HepG2 (cell line): ENCODE measurements at regions of chr12 and their contacts with region 1.

Region 1: DNA sequence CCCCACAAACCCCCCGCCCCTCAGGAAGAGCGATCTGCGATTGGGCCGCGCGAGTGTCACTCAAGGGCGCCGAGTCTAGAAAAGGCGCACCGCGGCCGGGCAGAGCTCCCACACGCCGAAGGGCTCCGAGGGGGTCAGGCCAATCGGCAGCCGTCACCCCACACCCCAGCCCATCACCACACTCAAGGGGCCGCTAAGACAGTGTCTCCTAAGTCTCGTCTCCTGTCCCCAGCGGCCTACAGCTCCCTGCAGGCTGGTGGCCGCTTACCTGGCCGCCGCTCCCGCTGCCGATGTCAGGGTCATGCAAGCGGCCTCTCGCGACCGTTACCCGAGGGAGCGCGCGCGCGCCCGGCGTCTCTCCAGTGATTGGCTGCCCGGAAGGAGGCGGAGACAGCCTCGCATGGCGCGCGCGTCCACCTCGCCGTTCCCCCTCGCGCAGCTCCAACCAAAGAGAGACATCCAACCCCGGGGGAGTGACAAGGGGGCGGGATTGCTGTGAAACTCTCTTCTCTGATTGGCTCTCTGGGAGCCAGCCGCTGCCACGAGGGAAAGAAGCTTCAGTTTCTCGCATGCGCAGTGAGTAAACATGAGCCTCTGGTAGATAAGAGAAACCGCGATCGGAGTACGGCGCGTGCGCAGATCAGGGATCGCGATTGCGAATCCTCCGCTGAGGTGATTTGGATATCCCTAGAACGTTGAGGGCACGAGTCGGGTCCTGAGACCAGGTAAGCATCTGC is at the starts of genes MPHOSPH9 and MTRFR:
- DNase-seq: peak; percentile 100
- ATAC-seq: peak; percentile 95
- H3K4me3 ChIP-seq: peak within 1 kb of the TSS; percentile 81 to 96 (median 95)
- H3K27ac ChIP-seq: peak within 1 kb of the TSS; percentile 89
- H3K4me1 ChIP-seq: peaks cover 55% of the 10 kb centered on the region
- H3K27me3 ChIP-seq: no peaks in the 10 kb centered on the region; a peak in 1 of 5 replicates
- CTCF ChIP-seq: no peak
- EP300 ChIP-seq: peak in 1 of 2 experiments; percentile 21; a peak in 2 of 4 replicates
- POLR2A ChIP-seq: peak; percentile 99
- RAD21 ChIP-seq: peak; percentile 72
- total RNA-seq, gene MPHOSPH9: 63.4 and 105 TPM in 2 replicates
- total RNA-seq, gene MTRFR: 9.9 and 10.0 TPM in 2 replicates

Region 2: GRCh38 chr12:122895705-122896636 is 337.0 kb before region 1 on chr12 and contains the start of gene VPS37B:
- CTCF ChIA-PET with region 1: no interaction called
- POLR2A ChIA-PET with region 1: interaction called, 13 read pairs
- in situ Hi-C with region 1: no loop called
- intact Hi-C with region 1: no loop called
- DNase-seq: peak; percentile 33
- ATAC-seq: peak; percentile 14
- H3K4me3 ChIP-seq: peak within 1 kb of the TSS; percentile 58 to 79 (median 76)
- H3K27ac ChIP-seq: peak within 1 kb of the TSS; percentile 69
- H3K4me1 ChIP-seq: peaks cover 71% of the 10 kb centered on the region
- H3K27me3 ChIP-seq: no peaks in the 10 kb centered on the region; a peak in 1 of 5 replicates
- CTCF ChIP-seq: no peak
- EP300 ChIP-seq: no peak
- POLR2A ChIP-seq: peak; percentile 41 to 72; a peak in 3 of 4 replicates
- RAD21 ChIP-seq: peak; percentile 18; the same call in 1 of the 2 replicates
- total RNA-seq, gene VPS37B: 5.3 TPM in 2 replicates

Region 3: DNA sequence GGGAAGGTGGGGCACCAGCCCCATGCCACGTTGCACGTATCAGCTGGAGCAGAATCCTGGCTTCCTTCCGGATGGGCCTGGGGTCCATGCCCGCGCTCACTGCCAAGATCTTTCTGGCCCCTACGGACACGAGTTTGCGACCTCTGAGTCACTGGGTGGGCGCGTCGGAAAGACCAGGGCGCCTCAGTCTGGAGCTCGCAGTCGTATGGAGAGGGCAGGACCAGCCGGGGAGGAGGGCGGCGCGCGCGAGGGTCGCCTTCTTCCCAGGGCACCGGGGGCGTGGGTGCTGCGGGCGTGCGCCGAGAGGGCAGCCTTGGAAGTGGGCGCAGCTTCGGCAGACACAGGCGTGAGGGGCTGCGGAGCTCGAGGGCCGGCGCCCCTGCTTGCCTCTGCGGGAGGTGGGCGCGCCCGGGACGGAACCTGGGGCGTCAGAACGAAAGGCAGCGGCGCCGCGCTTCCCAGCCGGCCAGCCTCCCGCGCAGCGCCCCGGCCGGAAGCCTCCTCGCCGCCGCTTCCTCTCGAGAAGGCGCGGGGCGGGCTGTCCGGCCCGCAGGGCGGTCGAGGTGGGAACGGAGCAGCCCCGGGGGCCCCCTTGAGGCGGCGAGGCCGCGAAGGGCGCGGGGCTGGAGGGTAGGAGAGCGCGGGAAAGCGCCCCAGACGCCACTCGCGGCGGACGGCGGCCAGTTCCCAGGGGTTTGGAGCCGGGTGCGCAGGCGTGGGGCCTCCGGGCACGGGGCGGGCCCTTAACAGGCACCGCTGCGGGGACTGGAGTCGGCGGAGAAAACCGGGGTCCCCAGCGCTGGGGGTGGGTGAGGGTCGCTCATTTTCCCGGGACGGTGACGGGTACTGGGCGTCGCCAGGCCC is 252.6 kb before region 1 on chr12 and contains the start of gene ARL6IP4:
- CTCF ChIA-PET with region 1: no interaction called
- POLR2A ChIA-PET with region 1: interaction called, 42 read pairs
- in situ Hi-C with region 1: no loop called
- intact Hi-C with region 1: loop called (anchors 5 kb)
- DNase-seq: no peak
- ATAC-seq: peak; percentile 48
- H3K4me3 ChIP-seq: peak within 1 kb of the TSS; percentile 87 to 99 (median 97)
- H3K27ac ChIP-seq: peak within 1 kb of the TSS; percentile 93
- H3K4me1 ChIP-seq: peaks cover 80% of the 10 kb centered on the region
- H3K27me3 ChIP-seq: no peaks in the 10 kb centered on the region; a peak in 1 of 5 replicates
- CTCF ChIP-seq: no peak; the same call in 1 of the 2 replicates
- EP300 ChIP-seq: no peak
- POLR2A ChIP-seq: peak in 1 of 2 experiments; percentile 25; a peak in 1 of 4 replicates
- RAD21 ChIP-seq: no peak; the same call in 1 of the 2 replicates
- total RNA-seq, gene ARL6IP4: 178 and 220 TPM in 2 replicates

Region 4: DNA sequence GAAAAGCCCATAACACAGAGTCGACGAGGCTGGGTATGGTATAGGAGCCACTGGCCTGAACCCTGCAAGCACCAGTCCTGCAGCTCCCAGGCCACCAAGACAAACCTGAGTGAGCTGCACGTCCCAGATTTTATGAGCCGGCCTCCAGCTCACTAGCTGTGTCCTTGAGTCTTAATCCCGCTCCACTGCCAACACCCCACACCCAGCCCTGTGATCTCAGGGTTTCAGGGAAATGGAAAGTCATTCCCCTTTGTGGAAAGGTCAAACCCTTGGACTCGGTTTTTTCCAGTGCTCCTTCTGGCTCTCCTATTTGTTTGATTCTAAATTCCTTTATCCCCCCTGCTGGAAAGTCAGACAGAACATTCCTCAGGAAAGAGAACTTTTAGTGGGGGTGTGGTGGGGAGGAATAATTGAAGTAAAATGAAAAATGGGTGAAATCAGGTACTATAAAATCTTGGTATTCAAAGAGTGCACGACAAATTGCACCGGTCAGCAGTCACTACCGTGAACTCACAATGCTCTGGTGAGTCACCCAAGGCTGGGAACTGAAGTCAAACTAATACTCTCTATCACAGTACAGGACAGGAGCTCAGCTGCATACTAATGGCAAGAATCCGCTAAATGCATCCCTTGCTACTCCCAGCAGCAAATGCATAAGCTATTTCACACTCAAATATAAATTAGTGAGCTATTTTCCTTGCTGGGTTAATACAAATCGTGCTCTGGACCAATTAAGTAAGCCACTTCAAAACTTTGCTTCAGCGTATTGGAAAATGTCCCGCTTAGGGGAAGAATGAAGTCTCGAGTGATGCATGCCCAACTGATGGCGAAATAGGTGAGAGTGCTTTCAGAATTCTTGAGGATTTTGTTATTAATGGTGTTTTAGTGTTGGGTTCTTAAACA is 91.1 kb before region 1 on chr12:
- CTCF ChIA-PET with region 1: no interaction called
- POLR2A ChIA-PET with region 1: interaction called, 34 read pairs
- in situ Hi-C with region 1: no loop called
- intact Hi-C with region 1: no loop called
- DNase-seq: peak; percentile 87
- ATAC-seq: peak; percentile 75
- H3K4me3 ChIP-seq: peak overlapping the region; percentile 43 to 71 (median 46); a peak in 5 of 6 replicates
- H3K27ac ChIP-seq: peak overlapping the region; percentile 97
- H3K4me1 ChIP-seq: peaks cover 68% of the 10 kb centered on the region
- H3K27me3 ChIP-seq: no peaks in the 10 kb centered on the region
- CTCF ChIP-seq: no peak
- EP300 ChIP-seq: peak in 1 of 2 experiments; percentile 85; a peak in 2 of 4 replicates
- POLR2A ChIP-seq: peak; percentile 68 to 73
- RAD21 ChIP-seq: no peak

Region 5: GRCh38 chr12:123250484-123251383 is 17.8 kb after region 1 on chr12:
- CTCF ChIA-PET with region 1: no interaction called
- POLR2A ChIA-PET with region 1: interaction called, 63 read pairs
- in situ Hi-C with region 1: no loop called
- intact Hi-C with region 1: no loop called
- DNase-seq: peak; percentile 45
- ATAC-seq: peak; percentile 22
- H3K4me3 ChIP-seq: 0 out of 6 replicates have a peak overlapping the region, but pooled peaks of 1 of the 3 experiments have one; percentile 10
- H3K27ac ChIP-seq: peak overlapping the region; percentile 75
- H3K4me1 ChIP-seq: peaks cover 25% of the 10 kb centered on the region
- H3K27me3 ChIP-seq: no peaks in the 10 kb centered on the region
- CTCF ChIP-seq: no peak
- EP300 ChIP-seq: no peak
- POLR2A ChIP-seq: no peak
- RAD21 ChIP-seq: no peak

Region 6: DNA sequence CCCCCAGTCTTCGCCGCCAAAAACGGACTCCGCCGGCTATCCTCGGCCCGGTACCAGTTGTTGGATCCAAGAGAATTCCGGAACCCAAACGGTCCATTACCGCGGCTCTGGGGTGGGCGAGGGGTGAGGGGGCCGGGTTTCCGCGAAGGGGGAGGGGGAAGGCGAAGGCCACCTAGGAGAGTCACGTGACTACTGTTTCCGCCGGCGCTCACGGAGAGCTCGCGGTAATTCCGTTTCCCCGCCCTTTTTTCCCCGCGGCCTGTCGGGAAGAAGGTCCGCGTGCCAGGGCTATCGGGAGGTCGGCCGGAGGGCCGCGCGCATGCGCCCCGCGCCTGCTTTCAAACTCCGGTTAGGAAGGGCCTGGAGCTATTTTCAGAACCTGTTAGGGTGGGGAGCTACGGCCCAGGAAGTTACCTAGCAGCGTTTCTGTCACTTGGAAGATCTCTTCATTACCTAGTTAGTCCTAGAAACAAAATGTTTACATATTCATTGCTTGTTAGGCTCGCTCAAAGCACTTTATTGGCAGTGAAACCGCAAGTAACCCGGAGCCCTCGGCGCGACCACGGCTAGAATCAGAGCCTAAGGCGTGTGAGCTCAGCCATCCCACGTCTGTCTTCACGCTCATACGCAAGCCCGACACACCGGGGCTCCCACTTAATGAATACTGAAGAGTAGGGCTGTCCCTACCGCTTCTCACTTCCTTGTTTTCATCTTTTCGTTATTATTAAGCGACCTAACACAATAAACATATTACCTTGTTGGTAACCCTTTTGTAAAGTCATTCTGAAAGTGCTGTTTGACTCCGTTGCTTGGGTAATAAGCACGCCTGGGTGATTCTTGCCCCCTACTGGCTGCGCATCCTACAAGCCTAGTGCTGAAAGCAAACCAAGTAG is 132.3 kb after region 1 on chr12:
- CTCF ChIA-PET with region 1: no interaction called
- POLR2A ChIA-PET with region 1: interaction called, 25 read pairs
- in situ Hi-C with region 1: no loop called
- intact Hi-C with region 1: no loop called
- DNase-seq: peak; percentile 96
- ATAC-seq: peak; percentile 83
- H3K4me3 ChIP-seq: peak overlapping the region; percentile 94 to 98 (median 96)
- H3K27ac ChIP-seq: peak overlapping the region; percentile 97
- H3K4me1 ChIP-seq: peaks cover 31% of the 10 kb centered on the region
- H3K27me3 ChIP-seq: no peaks in the 10 kb centered on the region; a peak in 1 of 5 replicates
- CTCF ChIP-seq: peak; percentile 86
- EP300 ChIP-seq: peak in 1 of 2 experiments; percentile 20; a peak in 1 of 4 replicates
- POLR2A ChIP-seq: peak; percentile 79 to 89
- RAD21 ChIP-seq: peak; percentile 41

Region 7: GRCh38 chr12:123395236-123395635 is 162.3 kb after region 1 on chr12:
- CTCF ChIA-PET with region 1: no interaction called
- POLR2A ChIA-PET with region 1: no interaction called
- in situ Hi-C with region 1: no loop called
- intact Hi-C with region 1: no loop called
- DNase-seq: no peak
- ATAC-seq: no peak
- H3K4me3 ChIP-seq: no peak overlapping the region
- H3K27ac ChIP-seq: no peak overlapping the region
- H3K4me1 ChIP-seq: peaks cover 16% of the 10 kb centered on the region
- H3K27me3 ChIP-seq: no peaks in the 10 kb centered on the region
- CTCF ChIP-seq: no peak
- EP300 ChIP-seq: no peak
- POLR2A ChIP-seq: no peak
- RAD21 ChIP-seq: no peak